IMR-90 (cell line): ENCODE measurements at regions of chr17 and their contacts with region 1.

Region 1: DNA sequence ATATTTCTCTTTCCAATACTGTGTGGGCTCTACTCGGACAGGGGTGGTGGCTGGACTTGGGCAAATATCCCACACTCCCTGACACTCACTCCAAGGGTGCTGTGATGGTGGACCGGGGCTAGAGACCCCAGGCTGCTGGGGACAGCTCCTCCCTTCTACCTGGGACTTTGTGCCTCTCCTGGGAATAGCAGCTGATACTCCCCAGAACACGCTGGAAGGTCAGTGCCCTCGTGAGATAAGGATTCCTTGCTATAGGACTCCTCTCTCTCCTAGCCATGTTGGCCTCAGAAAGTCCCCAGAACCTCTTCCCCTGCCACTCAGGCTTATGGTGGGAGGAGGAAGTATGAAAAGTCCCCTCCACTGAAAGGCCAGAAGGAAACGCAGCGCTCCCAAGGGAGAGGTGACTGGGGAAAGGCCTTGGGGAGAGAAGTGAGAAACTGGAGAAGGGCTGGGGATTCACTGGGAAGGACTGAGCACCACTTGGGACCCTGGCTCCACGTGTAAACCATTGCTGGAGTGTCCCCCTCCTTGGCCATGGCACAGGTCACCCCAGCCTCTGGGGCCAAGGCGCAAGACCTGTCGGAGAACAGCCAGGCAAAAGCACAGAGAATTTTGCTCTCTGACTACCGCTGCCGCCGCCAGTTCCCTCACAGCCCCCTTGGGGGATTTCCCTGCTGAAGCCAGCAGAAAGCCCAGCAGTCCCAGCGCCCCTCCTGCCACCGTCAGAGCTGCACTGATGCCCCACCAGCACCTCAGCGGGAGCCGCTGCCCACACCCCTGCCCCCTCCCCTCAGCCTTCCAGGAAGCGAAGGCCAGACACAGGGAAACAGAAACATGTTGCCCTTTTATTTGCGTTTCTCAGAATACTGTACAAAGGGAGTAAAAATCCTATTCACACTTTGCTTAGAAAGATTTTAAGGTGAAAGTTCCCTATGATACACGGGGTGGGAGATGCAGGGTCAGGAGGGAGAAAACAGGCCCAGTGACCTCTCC is 2.1 kb upstream of the GSDMB start:
- DNase-seq: no peak
- ATAC-seq: no peak
- H3K4me3 ChIP-seq: no peak overlapping the region
- H3K27ac ChIP-seq: no peak overlapping the region
- H3K4me1 ChIP-seq: peaks cover 15% of the 10 kb centered on the region
- H3K27me3 ChIP-seq: no peaks in the 10 kb centered on the region
- CTCF ChIP-seq: no peak
- POLR2A ChIP-seq: no peak
- RAD21 ChIP-seq: no peak

Region 2: DNA sequence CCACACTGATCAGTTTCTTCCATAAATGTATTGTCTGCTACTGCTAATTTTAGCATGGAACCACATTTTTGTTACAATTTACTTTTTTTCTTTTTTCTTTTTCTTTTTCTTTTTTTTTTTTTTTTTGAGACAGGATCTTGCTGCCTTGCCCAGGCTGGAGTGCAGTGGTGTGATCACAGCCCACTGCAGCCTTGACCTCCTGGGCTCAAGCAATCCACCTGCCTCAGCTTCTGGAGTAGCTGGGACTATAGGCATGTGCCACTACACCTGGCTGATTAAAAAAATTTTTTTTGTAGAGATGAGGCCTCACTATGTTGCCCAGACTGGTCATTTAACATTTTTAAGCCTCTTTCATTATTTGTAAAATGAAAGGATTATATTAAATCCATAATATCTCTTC is 33.4 kb before region 1 on chr17:
- CTCF ChIA-PET with region 1: no interaction called
- POLR2A ChIA-PET with region 1: interaction called, 12 read pairs
- dilution Hi-C with region 1: no loop called
- in situ Hi-C with region 1: no loop called
- intact Hi-C with region 1: no loop called
- DNase-seq: no peak
- ATAC-seq: no peak
- H3K4me3 ChIP-seq: no peak overlapping the region
- H3K27ac ChIP-seq: no peak overlapping the region
- H3K4me1 ChIP-seq: no peaks in the 10 kb centered on the region
- H3K27me3 ChIP-seq: peaks cover 22% of the 10 kb centered on the region
- CTCF ChIP-seq: no peak
- POLR2A ChIP-seq: no peak
- RAD21 ChIP-seq: no peak